A549 (cell line): ENCODE measurements at regions of chr3 and their contacts with region 1.

Region 1: DNA sequence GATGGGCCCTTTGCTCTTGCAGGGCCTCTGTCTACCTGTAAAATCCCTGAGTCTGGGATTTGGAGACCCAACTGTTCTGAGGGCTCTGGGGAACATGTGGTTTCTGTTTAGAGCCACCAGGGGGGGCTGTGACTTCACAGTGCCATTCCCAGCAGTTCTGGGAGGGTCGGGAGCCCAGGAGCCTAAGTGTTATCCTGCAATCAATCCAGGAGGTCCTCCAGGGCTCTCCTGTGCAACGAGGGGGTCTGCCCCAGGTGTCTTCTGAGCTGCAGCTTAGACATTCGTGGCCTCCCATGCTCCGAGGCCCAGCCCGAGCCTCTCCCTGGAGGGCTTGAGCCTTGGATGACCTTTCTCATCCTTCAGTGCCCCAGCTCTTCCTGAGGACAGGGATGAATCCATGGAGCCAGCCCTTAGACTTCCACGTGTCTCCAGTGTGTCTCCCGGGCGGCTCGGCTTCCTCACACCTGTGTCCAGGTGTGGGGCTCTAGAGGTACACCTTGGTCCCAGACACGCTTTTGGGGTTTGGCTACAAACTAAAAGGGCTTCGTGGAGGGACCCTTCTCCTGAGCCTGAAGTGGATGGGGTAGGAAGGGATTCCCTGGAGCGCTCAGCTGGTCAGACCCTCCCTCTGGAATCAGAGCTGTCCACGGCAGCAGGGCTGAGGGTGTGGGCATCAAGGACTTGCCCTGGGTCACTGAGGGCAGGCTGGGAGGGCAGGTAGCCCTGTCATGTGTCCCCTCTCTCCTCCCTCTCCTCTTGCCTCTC is 20.3 kb upstream of the ABTB1 start:
- DNase-seq: peak; percentile 58 to 70
- ATAC-seq: peak; percentile 88 to 97
- H3K4me3 ChIP-seq: no peak overlapping the region
- H3K27ac ChIP-seq: peak overlapping the region; percentile 56 to 58; a peak in 3 of 6 replicates
- H3K4me1 ChIP-seq: peaks cover 28% of the 10 kb centered on the region
- CTCF ChIP-seq: peak; percentile 77
- EP300 ChIP-seq: no peak
- POLR2A ChIP-seq: no peak
- RAD21 ChIP-seq: peak; percentile 90 to 92

Region 2: DNA sequence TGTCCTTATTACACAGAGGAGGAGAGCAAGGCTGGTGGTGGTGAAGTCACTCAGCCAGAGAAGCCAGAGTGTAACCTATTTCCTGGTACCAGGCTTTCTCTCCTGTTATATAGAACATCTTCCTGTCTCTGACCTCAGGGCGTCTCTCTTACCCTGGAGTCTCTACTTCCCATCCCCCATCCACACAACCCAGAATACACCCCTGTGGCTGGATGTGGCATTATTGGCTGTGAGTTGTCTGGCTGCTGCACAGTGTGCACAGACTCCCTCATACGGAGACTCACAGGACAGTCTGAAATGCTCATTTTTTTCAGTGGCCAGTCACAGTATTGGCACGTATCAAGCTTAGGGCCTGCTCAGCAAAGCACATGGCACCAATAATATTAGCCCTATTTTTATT is 14.9 kb before region 1 on chr3:
- CTCF ChIA-PET with region 1: interaction called, 18 read pairs
- POLR2A ChIA-PET with region 1: no interaction called
- DNase-seq: no peak
- ATAC-seq: peak; percentile 39 to 68; a peak in 4 of 6 replicates
- H3K4me3 ChIP-seq: no peak overlapping the region
- H3K27ac ChIP-seq: no peak overlapping the region
- H3K4me1 ChIP-seq: no peaks in the 10 kb centered on the region
- CTCF ChIP-seq: no peak
- EP300 ChIP-seq: no peak
- POLR2A ChIP-seq: no peak
- RAD21 ChIP-seq: no peak

Region 3: GRCh38 chr3:127672516-127673190 is 20.2 kb after region 1 on chr3 and contains the start of gene ABTB1:
- CTCF ChIA-PET with region 1: interaction called, 21 read pairs
- POLR2A ChIA-PET with region 1: no interaction called
- DNase-seq: peak; percentile 66 to 68
- ATAC-seq: peak; percentile 77 to 80
- H3K4me3 ChIP-seq: peak within 1 kb of the TSS; percentile 100
- H3K27ac ChIP-seq: peak within 1 kb of the TSS; percentile 100
- H3K4me1 ChIP-seq: peaks cover 11% of the 10 kb centered on the region; the same call in 1 of the 3 replicates
- CTCF ChIP-seq: no peak
- EP300 ChIP-seq: no peak
- POLR2A ChIP-seq: peak; percentile 52
- RAD21 ChIP-seq: no peak
- polyA plus RNA-seq, gene ABTB1: 9.7 and 10.7 TPM in 2 replicates

Region 4: GRCh38 chr3:127679285-127680145 is 27.1 kb after region 1 on chr3:
- CTCF ChIA-PET with region 1: interaction called, 11 read pairs
- POLR2A ChIA-PET with region 1: no interaction called
- DNase-seq: no peak
- ATAC-seq: peak in 1 of 2 experiments; percentile 14; a peak in 1 of 6 replicates
- H3K4me3 ChIP-seq: no peak overlapping the region
- H3K27ac ChIP-seq: no peak overlapping the region
- H3K4me1 ChIP-seq: no peaks in the 10 kb centered on the region
- CTCF ChIP-seq: no peak
- EP300 ChIP-seq: no peak
- POLR2A ChIP-seq: no peak
- RAD21 ChIP-seq: no peak

Region 5: DNA sequence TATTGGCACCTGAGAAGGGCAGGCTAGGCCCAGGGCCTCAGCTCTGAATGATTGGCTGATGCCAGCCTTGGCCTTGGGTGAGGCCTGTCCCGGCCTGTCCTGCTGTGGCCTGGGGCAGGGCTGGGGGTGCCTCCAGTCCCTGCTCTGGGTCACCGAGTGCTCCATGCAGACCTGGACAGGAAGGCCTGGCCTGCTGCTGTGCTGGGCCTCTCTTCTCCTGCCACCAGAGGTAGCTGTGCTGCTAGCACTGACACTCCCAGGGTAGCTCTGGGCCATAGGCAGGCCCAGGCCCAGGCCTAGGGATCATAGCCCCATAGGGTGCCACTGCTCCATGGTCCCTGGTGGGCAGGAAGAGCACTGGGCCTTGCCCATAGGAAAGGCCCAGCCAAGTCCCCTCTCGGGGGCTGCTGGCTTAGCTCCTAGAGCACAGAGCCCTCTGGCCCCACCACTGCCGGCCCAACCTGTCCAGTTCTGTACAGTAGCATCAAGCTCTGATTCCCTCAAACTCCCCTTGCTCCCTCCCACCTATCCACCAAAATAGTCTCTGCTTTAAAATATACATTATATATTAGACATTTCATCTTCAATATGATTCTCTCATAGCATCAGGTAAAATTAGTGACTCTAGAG is 38.5 kb after region 1 on chr3:
- CTCF ChIA-PET with region 1: interaction called, 15 read pairs
- POLR2A ChIA-PET with region 1: no interaction called
- DNase-seq: peak; percentile 7 to 75
- ATAC-seq: peak; percentile 90 to 96
- H3K4me3 ChIP-seq: no peak overlapping the region
- H3K27ac ChIP-seq: peak overlapping the region; percentile 72 to 90
- H3K4me1 ChIP-seq: peaks cover 51% of the 10 kb centered on the region
- CTCF ChIP-seq: peak; percentile 46; the same call in 2 of the 3 replicates
- EP300 ChIP-seq: no peak
- POLR2A ChIP-seq: no peak
- RAD21 ChIP-seq: peak; percentile 65 to 75

Region 6: GRCh38 chr3:127959846-127960245 is 307.4 kb after region 1 on chr3:
- CTCF ChIA-PET with region 1: interaction called, 35 read pairs
- POLR2A ChIA-PET with region 1: no interaction called
- DNase-seq: peak; percentile 31 to 37
- ATAC-seq: peak; percentile 71 to 82; a peak in 4 of 6 replicates
- H3K4me3 ChIP-seq: no peak overlapping the region
- H3K27ac ChIP-seq: peak overlapping the region; percentile 50 to 59; a peak in 4 of 6 replicates
- H3K4me1 ChIP-seq: peaks cover 30% of the 10 kb centered on the region
- CTCF ChIP-seq: peak; percentile 55
- EP300 ChIP-seq: no peak
- POLR2A ChIP-seq: no peak
- RAD21 ChIP-seq: peak; percentile 75 to 77

Region 7: DNA sequence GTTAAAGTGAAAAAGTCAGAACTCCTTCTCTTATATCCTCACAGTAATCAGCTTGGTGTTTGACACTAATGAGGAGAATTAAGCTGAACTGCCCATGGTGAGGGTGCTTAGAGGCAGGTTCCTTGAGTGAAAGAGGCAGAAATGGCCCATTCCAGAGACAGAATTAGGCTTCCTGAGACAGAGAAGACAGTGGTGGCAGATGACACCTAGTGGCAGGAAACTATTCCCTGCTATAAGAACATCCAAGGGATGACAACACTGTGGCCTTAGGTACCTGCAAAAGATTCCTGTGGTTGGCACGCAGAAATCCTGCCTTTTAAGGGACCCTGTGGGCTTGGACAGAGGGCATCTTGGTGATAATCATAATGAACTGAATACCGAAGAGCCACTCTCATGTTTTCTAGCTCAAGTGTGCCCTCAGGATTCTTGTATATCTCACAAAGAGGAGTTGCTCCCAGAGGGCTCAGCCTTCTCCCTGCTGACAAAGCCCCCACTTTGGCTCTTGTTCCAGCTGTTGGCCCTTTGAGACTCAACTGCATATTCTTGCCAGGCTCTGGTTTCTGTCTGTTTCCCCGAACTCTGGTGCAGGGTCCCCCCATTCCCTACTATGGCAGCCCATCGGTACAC is 318.7 kb after region 1 on chr3:
- CTCF ChIA-PET with region 1: interaction called, 29 read pairs
- POLR2A ChIA-PET with region 1: no interaction called
- DNase-seq: peak; percentile 46 to 63
- ATAC-seq: peak; percentile 93 to 95
- H3K4me3 ChIP-seq: no peak overlapping the region
- H3K27ac ChIP-seq: no peak overlapping the region
- H3K4me1 ChIP-seq: no peaks in the 10 kb centered on the region
- CTCF ChIP-seq: peak; percentile 74
- EP300 ChIP-seq: no peak
- POLR2A ChIP-seq: no peak
- RAD21 ChIP-seq: peak; percentile 81 to 89